ENCODE measurements at regions of chr1 and their contacts with region 1.

Region 1: GRCh38 chr1:225881969-225882693 is at the start of gene TMEM63A:
- DNase-seq: peak; percentile 85
- ATAC-seq: peak; percentile 82
- H3K4me3 Mint-ChIP-seq: peak within 1 kb of the TSS; percentile 87
- H3K27ac Mint-ChIP-seq: peak within 1 kb of the TSS; percentile 84
- H3K4me1 Mint-ChIP-seq: peaks cover 49% of the 10 kb centered on the region
- H3K27me3 Mint-ChIP-seq: no peaks in the 10 kb centered on the region
- CTCF ChIP-seq: no peak
- total RNA-seq, gene TMEM63A: 54.8 and 74.5 TPM in 2 replicates

Region 2: GRCh38 chr1:225809842-225810578 is 72.1 kb before region 1 on chr1 and contains the start of gene EPHX1:
- CTCF ChIA-PET with region 1: interaction called, 3 read pairs
- POLR2A ChIA-PET with region 1: interaction called, 4 read pairs
- intact Hi-C with region 1: loop called (anchors 2 kb)
- DNase-seq: peak; percentile 57
- ATAC-seq: peak; percentile 87
- H3K4me3 Mint-ChIP-seq: peak within 1 kb of the TSS; percentile 86
- H3K27ac Mint-ChIP-seq: no peak within 1 kb of the TSS
- H3K4me1 Mint-ChIP-seq: peaks cover 12% of the 10 kb centered on the region
- H3K27me3 Mint-ChIP-seq: peaks cover 3% of the 10 kb centered on the region
- CTCF ChIP-seq: no peak
- total RNA-seq, gene EPHX1: 0.93 and 1.2 TPM in 2 replicates

Region 3: GRCh38 chr1:225851805-225852204 is 30.3 kb before region 1 on chr1:
- CTCF ChIA-PET with region 1: interaction called, 5 read pairs
- POLR2A ChIA-PET with region 1: interaction called, 37 read pairs
- intact Hi-C with region 1: loop called (anchors 1 kb)
- DNase-seq: no peak
- ATAC-seq: peak; percentile 18
- H3K4me3 Mint-ChIP-seq: no peak overlapping the region
- H3K27ac Mint-ChIP-seq: peak overlapping the region; percentile 89
- H3K4me1 Mint-ChIP-seq: peaks cover 73% of the 10 kb centered on the region
- H3K27me3 Mint-ChIP-seq: no peaks in the 10 kb centered on the region
- CTCF ChIP-seq: no peak

Region 4: GRCh38 chr1:225896937-225897549 is 14.9 kb after region 1 on chr1:
- CTCF ChIA-PET with region 1: interaction called, 10 read pairs
- POLR2A ChIA-PET with region 1: interaction called, 93 read pairs
- intact Hi-C with region 1: loop called (anchors 1 kb)
- DNase-seq: peak; percentile 34
- ATAC-seq: peak; percentile 99
- H3K4me3 Mint-ChIP-seq: peak overlapping the region; percentile 48
- H3K27ac Mint-ChIP-seq: peak overlapping the region; percentile 95
- H3K4me1 Mint-ChIP-seq: peaks cover 37% of the 10 kb centered on the region
- H3K27me3 Mint-ChIP-seq: no peaks in the 10 kb centered on the region
- CTCF ChIP-seq: no peak

Region 5: GRCh38 chr1:225923692-225924555 is 41.8 kb after region 1 on chr1 and contains the start of gene PYCR2:
- CTCF ChIA-PET with region 1: interaction called, 7 read pairs
- POLR2A ChIA-PET with region 1: interaction called, 52 read pairs
- intact Hi-C with region 1: loop called (anchors 1 kb)
- DNase-seq: peak; percentile 93
- ATAC-seq: peak; percentile 98
- H3K4me3 Mint-ChIP-seq: peak within 1 kb of the TSS; percentile 95
- H3K27ac Mint-ChIP-seq: peak within 1 kb of the TSS; percentile 88
- H3K4me1 Mint-ChIP-seq: peaks cover 20% of the 10 kb centered on the region
- H3K27me3 Mint-ChIP-seq: no peaks in the 10 kb centered on the region
- CTCF ChIP-seq: no peak
- total RNA-seq, gene PYCR2: 109 and 110 TPM in 2 replicates

Measured in activated B cell treated with CpG ODN at 0.5 μM for 24 hours (primary cell).